ENCODE measurements at regions of chr4 and their contacts with region 1.

Region 1: GRCh38 chr4:25667931-25668557 is 12.4 kb downstream of the SLC34A2 start:
- DNase-seq: no peak
- H3K4me3 ChIP-seq: no peak overlapping the region
- H3K27me3 ChIP-seq: no peaks in the 10 kb centered on the region
- CTCF ChIP-seq: no peak

Region 2: GRCh38 chr4:25635504-25635903 is 32.5 kb before region 1 on chr4:
- CTCF ChIA-PET with region 1: no interaction called
- POLR2A ChIA-PET with region 1: interaction called, 12 read pairs
- DNase-seq: no peak
- H3K4me3 ChIP-seq: no peak overlapping the region
- H3K27me3 ChIP-seq: no peaks in the 10 kb centered on the region
- CTCF ChIP-seq: no peak